ENCODE measurements at regions of chr7 and their contacts with region 1.

Region 1: DNA sequence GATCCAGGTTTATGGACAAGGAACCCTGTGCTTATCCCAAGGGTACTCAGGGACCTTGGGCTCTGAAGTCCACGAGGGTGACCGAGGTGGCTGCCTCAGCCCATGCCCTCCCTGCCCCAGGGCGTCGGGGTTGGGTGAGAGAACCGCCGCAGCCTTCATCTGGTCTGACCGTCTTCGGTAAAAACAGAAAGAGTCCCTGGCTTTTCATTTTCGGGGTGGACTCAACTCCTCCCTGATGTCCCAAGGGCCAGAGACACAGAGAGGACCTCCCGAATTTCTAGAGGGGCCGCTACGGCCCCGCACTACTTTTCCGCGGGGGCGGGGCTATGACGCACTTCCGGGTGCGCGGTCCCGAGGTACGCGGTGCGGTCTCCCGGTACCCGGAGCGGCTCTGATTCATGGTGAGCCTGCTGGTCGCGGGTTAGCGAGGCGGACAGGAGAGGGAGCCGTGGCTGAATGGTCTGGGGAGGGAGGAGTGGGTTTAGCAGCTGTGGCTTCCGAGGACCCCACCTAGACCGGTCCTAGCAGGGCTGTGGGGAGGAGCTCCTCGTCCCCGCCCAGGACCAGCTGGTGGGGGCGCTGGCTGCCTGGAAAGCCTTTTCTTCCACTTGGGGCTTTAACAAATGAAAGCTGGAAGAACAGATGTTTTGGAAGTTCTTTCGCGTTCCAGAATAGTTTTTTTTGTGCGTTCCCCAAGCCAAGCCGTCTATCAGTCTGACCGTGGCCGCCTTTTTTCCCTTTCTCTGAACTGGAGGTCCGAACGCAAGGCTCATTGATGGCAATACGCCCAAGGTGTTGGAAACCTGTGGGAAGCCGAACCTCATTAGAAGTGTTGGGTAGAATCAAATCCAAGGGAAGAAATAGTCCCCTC is at the start of gene ZSCAN21:
- DNase-seq: peak; percentile 70 to 96
- H3K4me3 ChIP-seq: peak within 1 kb of the TSS; percentile 66
- CTCF ChIP-seq: no peak
- POLR2A ChIP-seq: no peak
- total RNA-seq, gene ZSCAN21: 13.2 to 25.5 (median 21.4) TPM

Region 2: GRCh38 chr7:99997545-99998137 is 52.0 kb before region 1 on chr7:
- intact Hi-C with region 1: loop called (anchors 10 kb)
- DNase-seq: peak in 1 of 2 donors; percentile 88
- H3K4me3 ChIP-seq: no peak overlapping the region
- CTCF ChIP-seq: peak in 1 of 3 donors; percentile 65
- POLR2A ChIP-seq: no peak

Region 3: DNA sequence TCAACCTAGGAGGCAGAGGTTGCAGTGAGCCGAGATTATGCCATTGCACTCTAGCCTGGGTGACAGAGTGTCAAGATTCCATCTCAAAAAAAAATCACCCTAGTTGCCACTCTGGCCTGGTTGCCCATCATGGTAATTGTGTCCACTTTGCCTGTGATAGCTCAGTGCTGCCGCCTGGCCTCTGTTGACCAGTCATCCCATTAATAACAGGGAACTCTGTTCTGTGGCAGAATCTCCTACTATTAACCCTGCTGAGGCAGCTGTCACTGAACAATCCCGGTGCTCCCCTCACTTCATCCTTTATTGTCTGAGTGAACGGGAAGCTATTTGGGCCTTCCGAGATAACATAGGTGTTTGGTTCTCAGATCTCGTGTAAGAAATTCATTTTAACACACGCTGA is 17.3 kb after region 1 on chr7:
- intact Hi-C with region 1: no loop called
- DNase-seq: no peak
- H3K4me3 ChIP-seq: no peak overlapping the region
- CTCF ChIP-seq: no peak
- POLR2A ChIP-seq: no peak

Region 4: DNA sequence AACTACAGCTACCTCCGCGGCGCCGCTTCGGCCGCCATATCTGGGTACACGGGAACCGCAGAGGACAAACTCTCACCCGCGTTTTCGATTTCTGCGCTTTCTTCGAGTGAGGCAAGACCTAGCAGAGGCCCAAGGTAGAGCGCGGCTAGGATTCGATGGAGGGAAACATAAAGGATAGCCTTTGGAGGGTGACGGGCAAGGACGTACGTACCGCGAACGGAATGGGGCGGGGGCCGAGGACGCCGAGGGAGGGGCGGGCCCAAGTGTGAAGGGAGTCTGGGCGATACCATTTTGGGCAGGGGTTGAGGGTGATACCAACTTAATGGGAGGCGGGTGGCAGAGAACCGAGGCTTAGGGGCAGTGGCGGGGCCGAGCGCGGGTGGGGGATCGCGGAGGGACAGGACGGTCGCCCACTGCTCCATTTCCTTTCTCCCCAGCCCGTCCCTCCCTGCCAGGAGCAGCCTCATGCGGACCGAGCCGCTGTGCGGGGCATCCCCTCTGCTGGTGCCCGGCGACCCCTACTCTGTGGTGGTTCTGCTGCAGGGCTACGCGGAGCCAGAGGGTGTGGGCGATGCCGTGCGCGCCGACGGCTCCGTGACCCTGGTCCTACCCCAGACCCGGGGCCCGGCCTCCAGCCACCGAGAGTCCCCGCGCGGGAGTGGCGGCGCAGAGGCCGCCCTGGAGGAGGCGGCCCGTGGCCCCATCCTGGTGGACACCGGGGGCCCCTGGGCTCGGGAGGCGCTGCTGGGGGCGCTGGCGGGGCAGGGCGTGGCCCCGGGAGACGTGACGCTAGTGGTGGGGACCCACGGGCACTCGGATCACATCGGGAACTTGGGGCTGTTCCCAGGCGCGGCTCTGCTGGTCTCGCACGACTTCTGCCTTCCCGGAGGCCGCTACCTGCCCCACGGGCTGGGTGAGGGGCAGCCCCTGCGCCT is 77.5 kb after region 1 on chr7 and contains the start of gene MBLAC1:
- intact Hi-C with region 1: no loop called
- DNase-seq: peak; percentile 90 to 97
- H3K4me3 ChIP-seq: peak within 1 kb of the TSS; percentile 66
- CTCF ChIP-seq: no peak
- POLR2A ChIP-seq: no peak
- total RNA-seq, gene MBLAC1: 1.6 to 8.7 (median 6.0) TPM